ENCODE measurements at regions of chr7 and their contacts with region 1.

Region 1: GRCh38 chr7:108569381-108570145 is at the starts of genes DNAJB9 and THAP5:
- DNase-seq: peak; percentile 98 to 99
- H3K4me3 ChIP-seq: peak within 1 kb of the TSS; percentile 81
- H3K27ac ChIP-seq: peak within 1 kb of the TSS; percentile 85
- H3K4me1 ChIP-seq: peaks cover 28% of the 10 kb centered on the region
- H3K27me3 ChIP-seq: no peaks in the 10 kb centered on the region
- CTCF ChIP-seq: no peak
- total RNA-seq, gene DNAJB9: 10.0 and 13.3 TPM in 2 replicates
- total RNA-seq, gene THAP5: 20.8 and 28.5 TPM in 2 replicates

Region 2: DNA sequence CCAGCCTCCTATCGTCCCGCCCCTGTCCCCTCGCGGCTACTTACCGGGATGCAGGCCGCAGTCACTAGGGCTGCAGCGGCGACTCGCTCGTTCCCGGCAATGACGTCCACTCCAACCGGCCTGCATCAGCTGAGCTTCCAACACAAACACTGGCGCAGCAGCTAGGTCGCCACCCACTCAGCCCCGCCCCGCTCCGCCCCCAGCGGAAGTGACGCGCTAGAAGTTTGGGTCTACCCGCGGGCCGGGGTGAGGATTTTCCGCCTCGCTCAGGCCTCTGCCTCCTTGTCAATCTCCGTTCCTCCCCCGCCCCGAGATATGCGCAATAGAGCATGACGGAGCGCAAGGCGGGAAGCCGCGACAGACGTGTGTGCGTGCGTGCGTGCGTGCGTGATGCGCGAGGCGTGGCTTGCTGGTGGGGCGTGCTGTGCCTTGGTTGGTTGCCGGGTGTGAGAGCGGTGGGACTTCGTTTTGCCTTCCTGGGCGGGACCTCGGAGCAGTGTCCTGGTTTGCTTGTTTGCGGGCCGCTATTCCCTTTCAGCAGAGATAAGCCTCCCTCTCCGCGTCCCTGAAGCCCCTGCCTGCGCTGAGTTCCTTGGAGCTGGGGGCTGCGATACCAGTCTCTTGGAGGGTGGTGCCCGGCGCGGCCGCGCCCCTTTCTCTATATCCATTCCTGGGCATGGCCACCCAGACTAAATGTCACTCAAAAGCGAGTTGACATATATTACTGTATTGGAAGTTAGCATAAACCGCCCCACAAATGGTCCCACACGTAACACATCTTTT is 43.4 kb before region 1 on chr7 and contains the start of gene PNPLA8:
- CTCF ChIA-PET with region 1: interaction called, 3 read pairs
- POLR2A ChIA-PET with region 1: interaction called, 13 read pairs
- intact Hi-C with region 1: loop called (anchors 1 kb)
- DNase-seq: peak; percentile 98 to 100
- H3K4me3 ChIP-seq: peak within 1 kb of the TSS; percentile 68
- H3K27ac ChIP-seq: peak within 1 kb of the TSS; percentile 96
- H3K4me1 ChIP-seq: peaks cover 56% of the 10 kb centered on the region
- H3K27me3 ChIP-seq: no peaks in the 10 kb centered on the region
- CTCF ChIP-seq: no peak
- total RNA-seq, gene PNPLA8: 15.6 and 31.3 TPM in 2 replicates

Region 3: DNA sequence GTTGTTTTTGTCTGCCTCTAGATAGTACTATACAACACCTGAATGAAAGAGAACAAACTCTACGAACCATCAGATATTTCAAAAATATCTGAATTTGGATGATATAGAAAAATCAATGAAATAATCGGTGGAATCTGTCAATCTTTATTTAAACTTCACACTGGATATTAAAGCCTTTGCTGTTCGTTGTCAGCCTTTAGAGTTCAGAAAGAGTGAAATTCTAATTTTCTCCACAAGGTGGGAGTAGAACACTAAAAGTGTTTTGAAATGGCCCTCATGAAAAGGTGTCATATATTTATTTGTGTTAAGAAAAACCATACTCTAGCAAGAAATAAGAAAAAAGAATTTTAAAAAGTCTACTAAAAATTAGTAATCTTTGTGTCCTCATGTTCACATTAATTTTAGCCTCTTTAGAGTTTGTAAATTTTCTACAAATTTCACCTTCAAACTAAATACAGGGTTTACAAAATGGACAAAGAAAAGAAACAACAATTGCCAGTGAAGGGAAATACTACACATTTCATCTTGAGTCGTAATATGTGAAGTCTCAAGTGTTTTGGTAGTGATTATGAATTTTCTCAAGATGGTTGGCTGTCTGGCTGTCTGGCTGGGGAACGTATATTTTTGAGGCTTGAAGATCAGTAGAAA is 43.7 kb after region 1 on chr7:
- CTCF ChIA-PET with region 1: no interaction called
- POLR2A ChIA-PET with region 1: no interaction called
- intact Hi-C with region 1: loop called (anchors 5 kb)
- DNase-seq: peak in 1 of 2 experiments; percentile 47
- H3K4me3 ChIP-seq: no peak overlapping the region
- H3K27ac ChIP-seq: no peak overlapping the region
- H3K4me1 ChIP-seq: 0 out of 2 replicates have a peak, but pooled peaks cover 10% of the 10 kb centered on the region
- H3K27me3 ChIP-seq: no peaks in the 10 kb centered on the region
- CTCF ChIP-seq: peak; percentile 88

Region 4: GRCh38 chr7:108660460-108660859 is 90.9 kb after region 1 on chr7:
- CTCF ChIA-PET with region 1: no interaction called
- POLR2A ChIA-PET with region 1: no interaction called
- intact Hi-C with region 1: no loop called
- DNase-seq: no peak
- H3K4me3 ChIP-seq: no peak overlapping the region
- H3K27ac ChIP-seq: no peak overlapping the region
- H3K4me1 ChIP-seq: no peaks in the 10 kb centered on the region
- H3K27me3 ChIP-seq: no peaks in the 10 kb centered on the region
- CTCF ChIP-seq: peak; percentile 60

Region 5: GRCh38 chr7:110291430-110291829 is 1721.9 kb after region 1 on chr7:
- CTCF ChIA-PET with region 1: interaction called, 14 read pairs
- POLR2A ChIA-PET with region 1: no interaction called
- intact Hi-C with region 1: no loop called
- DNase-seq: no peak
- H3K4me3 ChIP-seq: no peak overlapping the region
- H3K27ac ChIP-seq: no peak overlapping the region
- H3K4me1 ChIP-seq: no peaks in the 10 kb centered on the region
- H3K27me3 ChIP-seq: no peaks in the 10 kb centered on the region
- CTCF ChIP-seq: no peak

Measured in PC-9 (cell line).